Body of pancreas (tissue), 4 donors: ENCODE measurements at regions of chr7 and their contacts with region 1.

Region 1: DNA sequence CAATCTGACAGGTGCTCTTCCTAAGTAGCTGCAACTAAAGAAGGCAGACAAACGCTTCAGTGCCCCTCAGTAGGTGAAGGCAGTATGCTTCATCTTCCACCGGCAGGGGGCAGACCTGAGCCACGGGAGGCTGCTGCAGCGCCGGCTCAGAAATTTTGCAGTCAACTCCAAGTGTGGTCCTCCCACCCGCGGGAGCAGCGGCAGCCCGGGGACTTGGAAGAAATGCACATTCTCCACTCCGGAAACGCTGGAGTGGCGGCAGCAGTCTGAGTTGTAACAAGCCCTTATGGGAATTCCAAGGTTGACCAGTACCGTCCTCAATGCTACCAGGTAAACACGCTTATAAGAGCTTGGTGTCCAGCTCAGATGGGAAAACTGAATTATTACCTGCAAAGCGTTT is 3.4 kb downstream of the IGFBP3 start:
- DNase-seq: peak; percentile 69 to 82 (median 80)
- ATAC-seq: peak; percentile 55
- H3K4me3 ChIP-seq: no peak overlapping the region
- H3K27ac ChIP-seq: no peak overlapping the region
- H3K4me1 ChIP-seq: peaks cover 31% of the 10 kb centered on the region
- H3K27me3 ChIP-seq: peaks cover 0 to 5% of the 10 kb centered on the region in 2 donors
- CTCF ChIP-seq: peak; percentile 74 to 96 (median 83)
- POLR2A ChIP-seq: no peak

Region 2: DNA sequence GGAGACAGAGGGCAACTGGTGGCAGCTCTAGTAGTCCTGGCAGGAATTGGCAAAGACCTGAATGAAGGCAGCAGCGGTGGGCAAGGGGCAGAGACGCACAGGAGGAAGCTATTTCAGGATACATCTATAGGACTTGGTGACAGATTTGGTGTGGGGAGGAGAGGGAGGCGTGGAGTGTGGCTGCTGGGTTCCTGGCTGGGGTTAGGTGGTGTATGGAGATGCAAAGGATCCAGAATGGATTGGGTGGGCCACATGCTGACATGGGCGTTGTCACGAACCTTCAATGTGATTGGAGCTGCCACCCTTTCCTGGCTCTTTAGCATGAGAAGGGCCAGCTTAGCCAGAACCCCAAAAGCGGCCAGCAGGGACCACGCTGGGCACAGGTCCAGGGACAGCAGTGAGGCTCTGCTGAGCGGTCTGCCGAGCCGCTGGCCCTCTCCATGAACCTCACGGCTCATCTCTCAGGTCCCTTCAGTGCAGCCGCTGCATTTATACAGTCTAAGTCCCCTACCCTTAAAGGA is 353.7 kb before region 1 on chr7:
- intact Hi-C with region 1: no loop called
- DNase-seq: no peak
- ATAC-seq: no peak
- H3K4me3 ChIP-seq: no peak overlapping the region
- H3K27ac ChIP-seq: no peak overlapping the region
- H3K4me1 ChIP-seq: no peaks in the 10 kb centered on the region
- H3K27me3 ChIP-seq: no peaks in the 10 kb centered on the region
- CTCF ChIP-seq: no peak
- POLR2A ChIP-seq: no peak

Region 3: GRCh38 chr7:46352004-46352954 is 434.6 kb after region 1 on chr7:
- intact Hi-C with region 1: loop called (anchors 5 kb)
- DNase-seq: peak; percentile 25 to 47 (median 44)
- ATAC-seq: peak; percentile 53
- H3K4me3 ChIP-seq: no peak overlapping the region
- H3K27ac ChIP-seq: no peak overlapping the region
- H3K4me1 ChIP-seq: peaks cover 13% of the 10 kb centered on the region
- H3K27me3 ChIP-seq: no peaks in the 10 kb centered on the region
- CTCF ChIP-seq: peak; percentile 9 to 75 (median 67)
- POLR2A ChIP-seq: no peak

Region 4: DNA sequence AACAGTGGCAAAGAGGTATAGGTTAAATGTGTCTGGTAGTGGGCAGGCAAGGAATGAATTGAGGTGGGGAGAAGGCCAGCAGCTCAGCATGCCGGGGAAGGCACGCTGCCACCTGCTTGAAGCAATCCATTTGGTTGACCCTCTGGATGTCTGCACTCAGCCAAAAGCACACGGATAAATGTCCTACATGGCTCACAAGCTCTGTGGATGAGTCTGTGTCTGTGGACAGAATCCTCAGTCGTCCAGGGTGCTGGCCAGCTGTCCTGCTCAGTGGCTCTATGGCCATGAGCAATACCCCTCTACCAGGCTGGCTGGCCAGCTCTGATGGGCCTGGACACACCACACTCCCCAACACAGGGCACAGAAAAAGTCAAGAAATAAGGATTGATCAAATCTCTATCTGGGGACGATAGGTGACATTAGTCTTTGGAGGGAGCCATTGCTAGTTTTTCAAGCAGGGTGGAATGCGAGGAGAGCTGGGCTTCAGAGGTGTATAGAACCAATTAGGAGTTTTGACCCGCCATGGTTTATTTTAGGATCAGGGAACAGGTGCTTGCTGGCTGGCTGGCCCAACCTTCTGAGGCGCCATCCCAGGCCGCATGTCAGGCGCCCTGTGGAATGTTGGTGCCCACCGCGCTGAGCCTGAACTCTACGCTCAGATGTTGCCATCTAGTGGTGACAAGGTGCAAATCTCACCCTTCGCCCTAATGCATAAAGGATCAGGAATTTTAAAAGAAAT is 1170.8 kb after region 1 on chr7:
- intact Hi-C with region 1: loop called (anchors 5 kb)
- DNase-seq: peak; percentile 60 to 72 (median 64)
- ATAC-seq: peak; percentile 81
- H3K4me3 ChIP-seq: no peak overlapping the region
- H3K27ac ChIP-seq: no peak overlapping the region
- H3K4me1 ChIP-seq: peaks cover 7% of the 10 kb centered on the region
- H3K27me3 ChIP-seq: no peaks in the 10 kb centered on the region
- CTCF ChIP-seq: peak; percentile 49 to 93 (median 85)
- POLR2A ChIP-seq: no peak